ENCODE measurements at regions of chr3 and their contacts with region 1.

Region 1: GRCh38 chr3:18428991-18429745 is 4.0 kb upstream of the SATB1 start:
- DNase-seq: no peak
- H3K4me3 Mint-ChIP-seq: peak overlapping the region; percentile 68
- H3K27ac Mint-ChIP-seq: peak overlapping the region; percentile 87
- H3K4me1 Mint-ChIP-seq: peaks cover 68% of the 10 kb centered on the region
- H3K27me3 Mint-ChIP-seq: no peaks in the 10 kb centered on the region

Region 2: GRCh38 chr3:18417904-18418572 is 11.1 kb before region 1 on chr3:
- CTCF ChIA-PET with region 1: interaction called, 11 read pairs
- DNase-seq: no peak
- H3K4me3 Mint-ChIP-seq: peak overlapping the region; percentile 75
- H3K27ac Mint-ChIP-seq: peak overlapping the region; percentile 92
- H3K4me1 Mint-ChIP-seq: peaks cover 89% of the 10 kb centered on the region
- H3K27me3 Mint-ChIP-seq: no peaks in the 10 kb centered on the region

Region 3: GRCh38 chr3:18586076-18586475 is 156.9 kb after region 1 on chr3:
- CTCF ChIA-PET with region 1: no interaction called
- DNase-seq: no peak
- H3K4me3 Mint-ChIP-seq: no peak overlapping the region
- H3K27ac Mint-ChIP-seq: no peak overlapping the region
- H3K4me1 Mint-ChIP-seq: no peaks in the 10 kb centered on the region
- H3K27me3 Mint-ChIP-seq: no peaks in the 10 kb centered on the region

Measured in activated naive CD4-positive, alpha-beta T cell treated with anti-CD3 and anti-CD28 coated beads, Interleukin-2, amount 10 ng/mL, durations not matched to agents 7 days and 5 days (primary cell).